Activated CD4-positive, alpha-beta memory T cell treated with anti-CD3 and anti-CD28 coated beads for 36 hours (primary cell): ENCODE measurements at regions of chr22 and their contacts with region 1.

Region 1: DNA sequence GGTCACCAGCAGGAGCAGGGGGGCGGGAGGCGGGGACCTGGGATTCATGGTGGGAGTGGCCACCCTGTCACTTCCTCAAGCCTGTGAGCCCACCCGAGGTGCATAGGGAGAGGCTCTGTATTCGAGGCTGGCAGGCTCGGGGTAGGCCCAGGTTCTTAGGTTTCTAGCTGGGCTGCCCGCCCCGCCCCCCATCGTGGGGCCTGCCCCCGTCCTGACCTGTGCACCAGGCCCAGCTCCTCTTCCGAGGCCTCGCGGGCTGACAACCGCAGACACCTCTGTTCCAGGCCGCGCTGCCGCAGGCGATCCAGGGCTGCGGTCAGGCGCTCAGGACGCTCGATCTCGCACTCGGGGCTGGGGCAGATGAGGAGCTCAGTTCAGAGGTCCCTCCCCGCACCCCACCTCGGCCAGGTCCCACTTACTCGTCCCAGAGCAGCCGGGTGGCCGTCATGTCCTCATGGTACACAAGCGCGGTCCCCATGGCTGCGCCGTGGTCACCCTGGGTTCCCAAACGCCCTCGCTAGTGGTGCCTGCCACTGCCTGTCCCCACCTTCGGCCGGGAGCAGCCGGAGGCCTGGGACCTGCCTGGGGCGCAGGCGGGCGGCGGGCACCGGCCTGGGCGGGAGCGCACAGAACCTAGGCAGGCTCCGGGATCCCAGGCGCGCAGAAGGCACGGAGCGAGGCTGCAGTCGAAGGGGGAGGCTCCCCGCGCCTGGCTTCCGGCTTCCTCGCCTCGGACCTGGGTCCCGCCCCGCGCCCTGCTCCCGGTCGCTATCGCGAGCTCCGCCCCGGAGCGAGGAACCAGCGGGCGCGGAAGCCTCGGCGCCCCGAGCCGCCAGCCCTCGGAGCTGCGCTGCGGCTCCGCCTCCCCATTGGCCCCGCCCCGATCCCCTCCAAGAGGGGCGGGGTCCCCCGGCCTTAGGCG is at the start of gene HDAC10:
- DNase-seq: peak; percentile 91
- H3K4me3 Mint-ChIP-seq: peak within 1 kb of the TSS; percentile 84
- H3K27ac Mint-ChIP-seq: peak within 1 kb of the TSS; percentile 51
- H3K4me1 Mint-ChIP-seq: peaks cover 24% of the 10 kb centered on the region
- H3K27me3 Mint-ChIP-seq: no peaks in the 10 kb centered on the region
- total RNA-seq, gene HDAC10: 46.1 to 47.6 TPM

Region 2: DNA sequence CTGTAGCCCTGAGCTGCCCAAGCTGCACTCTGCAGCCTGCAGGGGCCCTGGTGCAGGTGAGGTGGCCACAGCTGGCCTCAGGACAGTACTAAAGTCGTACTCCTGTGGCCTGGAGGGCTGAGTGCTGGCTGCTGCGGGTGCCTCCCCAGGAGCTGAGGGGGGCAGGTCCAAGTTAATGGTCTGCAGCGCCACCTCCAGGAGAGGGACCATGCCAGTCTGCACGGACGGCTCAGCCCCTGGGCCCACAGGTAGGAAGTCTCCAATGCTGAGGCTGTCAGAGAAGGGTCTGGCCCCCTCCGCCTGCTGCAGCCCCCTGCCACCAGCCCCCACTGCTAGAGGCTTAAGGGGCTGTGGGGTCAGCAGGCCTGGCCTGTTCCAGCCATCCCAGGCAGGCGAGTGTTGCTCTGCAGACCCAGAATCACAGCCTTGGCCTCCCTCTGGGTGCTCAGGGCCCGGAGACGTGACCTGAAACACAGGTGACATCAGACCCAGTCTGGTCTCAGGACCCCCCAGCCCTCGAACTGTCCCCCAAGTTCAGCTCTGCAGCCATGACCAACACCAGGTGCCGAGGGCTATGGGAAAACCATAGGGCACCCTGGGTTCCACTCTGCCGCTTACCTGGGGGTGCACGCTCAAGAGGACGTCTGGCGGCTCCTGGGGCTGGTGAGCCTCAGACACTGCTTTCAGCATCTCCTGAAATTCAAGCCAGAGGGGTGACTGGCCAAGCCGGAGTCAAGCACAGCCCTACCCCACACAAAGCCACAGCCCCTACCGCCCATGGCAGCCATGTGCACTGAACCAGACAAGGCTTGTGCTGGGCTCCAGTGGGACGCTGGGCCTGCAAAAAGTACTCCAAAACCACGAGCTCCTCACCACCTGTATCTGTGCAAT is 29.2 kb before region 1 on chr22:
- CTCF ChIA-PET with region 1: no interaction called
- POLR2A ChIA-PET with region 1: no interaction called
- intact Hi-C with region 1: no loop called
- DNase-seq: no peak
- H3K4me3 Mint-ChIP-seq: no peak overlapping the region
- H3K27ac Mint-ChIP-seq: no peak overlapping the region
- H3K4me1 Mint-ChIP-seq: no peaks in the 10 kb centered on the region
- H3K27me3 Mint-ChIP-seq: no peaks in the 10 kb centered on the region

Region 3: GRCh38 chr22:50260801-50261614 is 10.2 kb after region 1 on chr22:
- CTCF ChIA-PET with region 1: interaction called, 9 read pairs
- POLR2A ChIA-PET with region 1: interaction called, 15 read pairs
- intact Hi-C with region 1: no loop called
- DNase-seq: peak; percentile 38
- H3K4me3 Mint-ChIP-seq: peak overlapping the region; percentile 39
- H3K27ac Mint-ChIP-seq: no peak overlapping the region
- H3K4me1 Mint-ChIP-seq: peaks cover 5% of the 10 kb centered on the region
- H3K27me3 Mint-ChIP-seq: peaks cover 19% of the 10 kb centered on the region